A673 (cell line): ENCODE measurements at regions of chr17 and their contacts with region 1.

Region 1: DNA sequence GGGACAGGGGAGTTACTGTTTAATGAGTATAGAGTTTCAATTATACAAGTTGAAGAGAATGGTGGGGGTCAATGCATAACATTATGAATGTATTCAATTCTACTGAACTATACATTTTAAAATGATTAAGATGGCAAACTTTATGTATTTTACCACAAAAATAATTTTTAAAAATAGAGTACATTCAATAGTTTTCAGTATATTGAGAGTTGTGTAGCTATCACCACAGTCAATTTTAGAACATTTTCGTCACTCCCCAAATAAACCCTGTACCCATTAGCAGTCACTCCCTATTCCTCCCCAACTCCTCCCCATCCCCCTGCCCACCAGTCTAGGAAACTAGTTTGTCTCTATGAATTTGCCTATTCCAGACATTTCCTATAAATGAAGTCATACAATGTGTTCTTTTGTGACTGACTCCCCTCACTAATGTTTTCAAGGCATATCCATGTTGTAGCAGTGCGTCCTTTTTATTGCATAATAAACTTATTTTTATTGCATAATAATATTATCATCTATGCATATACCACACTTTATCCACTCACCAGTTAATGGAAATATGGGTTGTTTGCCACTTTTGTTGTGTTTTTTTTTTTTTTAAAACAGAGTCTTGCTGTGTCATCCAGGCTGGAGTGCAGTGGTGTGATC is 52.5 kb upstream of the ERN1 start:
- DNase-seq: no peak
- H3K4me3 ChIP-seq: no peak overlapping the region
- H3K27ac ChIP-seq: no peak overlapping the region
- H3K4me1 ChIP-seq: no peaks in the 10 kb centered on the region
- H3K27me3 ChIP-seq: no peaks in the 10 kb centered on the region
- CTCF ChIP-seq: no peak

Region 2: GRCh38 chr17:64117981-64118979 is 64.2 kb before region 1 on chr17:
- CTCF ChIA-PET with region 1: no interaction called
- POLR2A ChIA-PET with region 1: no interaction called
- intact Hi-C with region 1: no loop called
- DNase-seq: peak; percentile 66
- H3K4me3 ChIP-seq: no peak overlapping the region
- H3K27ac ChIP-seq: peak overlapping the region; percentile 3
- H3K4me1 ChIP-seq: peaks cover 32% of the 10 kb centered on the region
- H3K27me3 ChIP-seq: no peaks in the 10 kb centered on the region
- CTCF ChIP-seq: no peak

Region 3: GRCh38 chr17:64300699-64300965 is 118.2 kb after region 1 on chr17:
- CTCF ChIA-PET with region 1: no interaction called
- POLR2A ChIA-PET with region 1: interaction called, 17 read pairs
- intact Hi-C with region 1: no loop called
- DNase-seq: no peak
- H3K4me3 ChIP-seq: no peak overlapping the region
- H3K27ac ChIP-seq: no peak overlapping the region
- H3K4me1 ChIP-seq: no peaks in the 10 kb centered on the region
- H3K27me3 ChIP-seq: no peaks in the 10 kb centered on the region
- CTCF ChIP-seq: no peak